ENCODE measurements at regions of chr3 and their contacts with region 1.

Region 1: DNA sequence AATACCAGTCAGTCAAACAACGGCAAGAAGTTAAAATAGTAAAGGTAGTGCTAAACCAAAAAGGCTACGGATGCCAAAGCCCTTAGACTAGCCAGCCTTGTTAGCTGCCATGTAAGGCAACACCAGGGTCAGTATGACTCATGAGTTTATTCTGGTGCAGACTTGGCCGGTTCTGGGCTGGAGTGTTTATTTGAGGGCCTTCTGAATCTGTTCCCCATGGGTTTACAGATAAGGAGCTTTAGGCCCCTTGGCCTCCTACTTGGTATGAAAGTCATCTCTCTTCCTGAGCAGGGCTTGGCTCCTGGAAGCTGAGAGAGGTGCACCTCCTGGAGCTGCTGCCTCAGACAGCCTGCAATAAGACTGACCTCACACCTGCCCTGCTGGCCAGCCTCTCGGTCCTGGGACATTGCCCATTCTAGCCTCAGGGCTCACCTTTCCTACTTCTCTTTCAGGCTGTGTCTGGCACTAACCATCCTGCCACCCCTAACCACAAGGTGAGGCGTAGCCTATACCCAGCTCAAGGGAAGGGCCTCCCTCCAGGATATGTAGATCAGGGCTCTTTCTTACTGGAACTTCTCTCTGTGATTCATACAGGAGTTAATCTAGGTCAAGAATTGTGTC is 10.4 kb upstream of the RTP1 start:
- DNase-seq: peak; percentile 83
- H3K4me3 ChIP-seq: no peak overlapping the region
- H3K27ac ChIP-seq: peak overlapping the region; percentile 29
- H3K4me1 ChIP-seq: peaks cover 54% of the 10 kb centered on the region
- H3K27me3 ChIP-seq: no peaks in the 10 kb centered on the region
- CTCF ChIP-seq: no peak

Region 2: DNA sequence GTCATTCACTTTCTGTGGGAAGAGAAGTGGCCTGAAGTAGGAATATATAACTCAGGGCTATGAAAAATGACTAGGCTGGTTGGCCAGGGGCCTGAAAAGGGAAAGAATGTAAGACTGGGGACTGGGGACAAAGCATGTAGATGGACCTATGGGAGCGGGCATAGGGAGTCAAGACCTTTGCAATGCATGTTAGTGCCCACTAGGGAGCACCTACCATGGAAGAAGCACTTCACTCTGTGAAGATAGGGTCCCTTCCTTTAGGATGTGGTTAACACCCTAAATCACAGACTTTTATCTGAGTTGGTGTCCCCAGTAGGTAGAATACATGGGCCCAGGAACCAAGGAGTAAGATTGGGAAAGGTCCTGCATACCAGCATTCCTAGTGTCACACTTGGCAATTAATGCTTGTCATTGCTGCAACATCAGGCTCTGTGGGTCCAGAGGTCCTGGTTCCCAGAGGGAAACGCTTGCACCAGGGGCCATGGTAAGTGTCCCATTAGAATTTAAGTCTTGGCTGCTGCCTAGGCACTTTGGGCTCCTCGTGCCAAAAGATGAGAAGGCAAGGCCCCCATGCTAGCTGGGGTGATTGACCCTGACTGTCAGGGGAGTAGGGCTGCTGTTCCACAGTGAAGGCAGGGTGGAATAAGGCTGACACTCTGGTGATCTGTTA is 722.4 kb before region 1 on chr3:
- CTCF ChIA-PET with region 1: no interaction called
- dilution Hi-C with region 1: no loop called
- in situ Hi-C with region 1: no loop called
- intact Hi-C with region 1: no loop called
- DNase-seq: no peak
- H3K4me3 ChIP-seq: no peak overlapping the region
- H3K27ac ChIP-seq: no peak overlapping the region
- H3K4me1 ChIP-seq: no peaks in the 10 kb centered on the region
- H3K27me3 ChIP-seq: no peaks in the 10 kb centered on the region
- CTCF ChIP-seq: peak in 1 of 2 donors; percentile 6

Region 3: DNA sequence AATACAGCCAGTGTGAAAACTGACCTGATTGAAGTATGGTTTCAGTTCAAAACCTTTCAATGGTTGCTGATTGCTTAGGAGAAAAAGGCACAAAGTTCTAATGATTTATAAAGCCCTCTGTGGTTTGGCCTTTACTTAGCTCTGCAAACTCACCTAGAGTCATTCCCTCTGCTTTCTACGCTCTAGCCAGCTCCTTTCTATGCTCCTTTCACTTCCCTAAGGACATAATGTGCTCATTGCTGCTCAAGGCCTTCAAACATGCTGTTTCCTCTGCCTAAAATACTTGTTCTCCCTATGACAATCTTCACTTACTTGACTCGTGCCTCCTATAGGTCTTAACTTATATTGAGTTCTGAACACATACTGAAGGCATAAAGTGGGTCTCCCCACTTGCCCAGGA is 66.6 kb before region 1 on chr3:
- CTCF ChIA-PET with region 1: no interaction called
- dilution Hi-C with region 1: loop called (anchors 5 kb)
- in situ Hi-C with region 1: no loop called
- intact Hi-C with region 1: no loop called
- DNase-seq: no peak
- H3K4me3 ChIP-seq: no peak overlapping the region
- H3K27ac ChIP-seq: no peak overlapping the region
- H3K4me1 ChIP-seq: no peaks in the 10 kb centered on the region
- H3K27me3 ChIP-seq: no peaks in the 10 kb centered on the region
- CTCF ChIP-seq: no peak

Measured in mammary epithelial cell (primary cell).